ENCODE measurements at regions of chr3 and their contacts with region 1.

Region 1: DNA sequence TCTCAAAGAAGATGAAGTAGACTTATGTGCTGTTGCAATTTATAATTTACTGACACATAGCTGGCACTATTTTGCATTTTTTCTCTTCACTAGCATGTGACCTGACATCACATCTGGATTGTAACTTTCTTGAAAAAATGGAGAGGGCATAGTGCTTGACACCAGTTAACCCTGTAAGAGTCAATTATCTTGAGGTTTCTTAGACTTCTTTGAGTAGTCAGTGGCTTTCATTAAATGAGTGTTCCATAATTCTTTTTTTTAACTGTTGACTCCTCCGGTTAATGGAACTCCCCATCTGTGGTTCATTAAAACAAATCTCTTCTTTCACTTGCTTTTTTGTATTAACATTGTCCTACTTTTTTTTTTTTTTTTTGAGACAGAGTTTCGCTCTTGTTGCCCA is 16.9 kb upstream of the PRKCI start:
- DNase-seq: no peak
- ATAC-seq: no peak
- H3K4me3 ChIP-seq: no peak overlapping the region
- H3K27ac ChIP-seq: no peak overlapping the region
- H3K4me1 ChIP-seq: no peaks in the 10 kb centered on the region
- H3K27me3 ChIP-seq: peaks cover 2% of the 10 kb centered on the region; the same call in 1 of the 2 replicates
- CTCF ChIP-seq: no peak

Region 2: DNA sequence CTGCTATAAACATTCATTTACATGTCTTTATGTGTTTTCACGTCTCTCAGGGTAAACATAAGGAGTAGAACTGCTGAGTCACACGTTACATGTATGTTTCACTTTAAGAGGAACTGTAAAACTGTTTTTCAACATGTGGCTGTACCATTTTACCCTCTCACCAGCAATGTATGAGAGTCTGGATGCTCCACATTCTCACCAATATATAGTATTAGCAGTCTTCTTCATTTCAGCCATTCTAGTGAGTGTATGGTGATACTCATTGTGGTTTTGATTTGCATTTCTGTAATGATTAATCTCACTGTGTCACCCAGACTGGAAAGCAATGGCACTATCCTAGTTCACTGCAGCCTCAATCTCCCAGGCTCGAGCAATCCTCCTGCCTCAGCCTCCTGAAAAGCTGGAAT is 60.9 kb before region 1 on chr3:
- CTCF ChIA-PET with region 1: no interaction called
- POLR2A ChIA-PET with region 1: no interaction called
- in situ Hi-C with region 1: no loop called
- intact Hi-C with region 1: loop called (anchors 1 kb)
- DNase-seq: no peak
- ATAC-seq: no peak
- H3K4me3 ChIP-seq: no peak overlapping the region
- H3K27ac ChIP-seq: no peak overlapping the region
- H3K4me1 ChIP-seq: no peaks in the 10 kb centered on the region
- H3K27me3 ChIP-seq: no peaks in the 10 kb centered on the region
- CTCF ChIP-seq: no peak

Region 3: DNA sequence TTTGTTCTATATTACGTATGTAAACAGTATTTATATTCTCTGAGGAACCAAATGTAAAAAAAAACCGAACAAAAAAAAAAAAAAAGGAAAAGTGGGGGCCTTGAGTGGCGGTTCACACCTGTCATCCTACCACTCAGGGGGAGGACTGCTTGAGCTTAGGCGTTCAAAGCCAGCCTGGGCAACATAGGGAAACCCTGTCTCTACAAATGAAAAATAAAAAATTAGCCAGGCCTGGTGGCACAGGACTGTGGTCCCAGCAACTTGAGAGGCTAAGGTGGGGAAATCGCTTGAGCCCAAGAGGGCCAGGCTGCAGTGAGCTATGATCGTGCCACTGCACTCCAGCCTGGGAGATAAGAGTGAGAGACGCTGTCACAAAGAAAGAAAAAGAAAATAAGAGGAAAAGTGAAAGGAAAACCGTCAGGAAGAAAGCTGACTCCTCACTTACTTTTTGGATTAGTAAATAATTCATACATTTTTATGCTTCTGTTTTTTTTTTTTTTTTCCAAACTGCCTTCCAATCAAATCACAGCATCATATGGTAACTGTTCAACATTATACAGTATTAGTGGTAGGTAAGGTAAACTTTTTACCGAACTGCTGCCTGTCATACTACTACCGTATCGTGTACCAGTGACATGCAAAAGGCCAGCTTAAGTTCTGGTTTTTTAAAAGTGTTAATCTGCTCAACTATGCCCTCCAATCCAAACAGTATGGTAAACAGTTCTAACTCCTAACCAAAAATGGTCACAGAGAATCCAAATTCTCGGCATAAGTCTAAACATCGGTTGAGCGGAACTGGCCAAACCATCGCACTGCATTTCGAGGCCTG is 25.0 kb before region 1 on chr3:
- CTCF ChIA-PET with region 1: no interaction called
- POLR2A ChIA-PET with region 1: interaction called, 15 read pairs
- in situ Hi-C with region 1: no loop called
- intact Hi-C with region 1: no loop called
- DNase-seq: no peak
- ATAC-seq: peak; percentile 27
- H3K4me3 ChIP-seq: peak overlapping the region; percentile 76 to 93
- H3K27ac ChIP-seq: peak overlapping the region; percentile 75
- H3K4me1 ChIP-seq: peaks cover 6% of the 10 kb centered on the region
- H3K27me3 ChIP-seq: no peaks in the 10 kb centered on the region
- CTCF ChIP-seq: no peak

Region 4: GRCh38 chr3:170338690-170339340 is 133.5 kb after region 1 on chr3:
- CTCF ChIA-PET with region 1: interaction called, 10 read pairs
- POLR2A ChIA-PET with region 1: no interaction called
- in situ Hi-C with region 1: no loop called
- intact Hi-C with region 1: no loop called
- DNase-seq: no peak
- ATAC-seq: no peak
- H3K4me3 ChIP-seq: no peak overlapping the region
- H3K27ac ChIP-seq: no peak overlapping the region
- H3K4me1 ChIP-seq: peaks cover 9% of the 10 kb centered on the region
- H3K27me3 ChIP-seq: no peaks in the 10 kb centered on the region
- CTCF ChIP-seq: no peak